Left ventricle myocardium inferior (tissue), 1 donor: ENCODE measurements at regions of chr6 and their contacts with region 1.

Region 1: DNA sequence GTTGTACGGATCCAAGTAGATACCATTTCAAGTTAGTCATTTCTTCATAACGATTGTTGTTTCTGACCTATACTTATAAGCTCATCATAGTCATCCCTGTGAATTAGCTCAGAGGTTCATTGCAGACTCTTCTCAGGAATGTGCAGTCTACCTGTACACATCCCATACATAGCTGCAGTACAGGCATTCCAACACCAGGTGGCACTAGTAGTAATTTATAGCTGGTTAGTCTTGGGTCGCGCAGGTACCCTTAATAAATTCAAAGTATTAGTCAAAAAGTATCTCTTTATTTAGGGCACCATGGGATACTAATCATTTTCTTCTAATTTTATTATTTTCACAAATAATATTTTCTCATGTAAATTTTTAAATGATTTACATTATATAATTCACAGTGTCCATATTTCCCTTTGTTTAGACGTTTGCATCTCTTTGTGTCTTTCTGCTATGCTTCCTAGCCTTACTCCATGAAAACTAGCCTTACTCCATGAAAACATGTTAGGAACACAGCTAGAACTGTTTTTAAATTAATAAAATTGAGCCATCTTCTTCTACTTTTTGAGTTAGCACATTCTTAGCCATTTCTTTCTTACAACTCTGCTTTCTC is 128.6 kb upstream of the FAM83B start:
- DNase-seq: no peak
- H3K4me3 ChIP-seq: no peak overlapping the region
- H3K27ac ChIP-seq: no peak overlapping the region
- H3K4me1 ChIP-seq: peaks cover under 1% of the 10 kb centered on the region
- H3K27me3 ChIP-seq: no peaks in the 10 kb centered on the region
- CTCF ChIP-seq: peak; percentile 87

Region 2: DNA sequence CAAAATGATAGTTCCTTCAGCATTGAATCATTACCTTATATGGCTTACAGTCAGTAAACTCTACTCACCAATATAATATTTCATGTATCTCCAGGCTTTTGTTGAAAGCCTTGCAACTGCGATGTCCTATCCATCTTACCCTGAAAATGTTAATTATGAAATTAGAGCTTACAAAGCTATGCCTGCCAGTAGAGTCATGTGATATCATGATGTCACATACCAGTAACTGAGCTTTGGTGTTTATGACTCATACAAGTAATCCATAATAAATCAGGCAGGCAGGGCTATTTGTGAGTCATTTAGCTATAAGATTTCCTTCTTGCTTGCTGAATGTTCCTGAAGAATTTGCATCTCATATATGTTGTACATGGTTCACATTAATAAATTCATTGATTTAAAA is 83.7 kb after region 1 on chr6:
- intact Hi-C with region 1: no loop called
- DNase-seq: no peak
- H3K4me3 ChIP-seq: no peak overlapping the region
- H3K27ac ChIP-seq: no peak overlapping the region
- H3K4me1 ChIP-seq: peaks cover 11% of the 10 kb centered on the region
- H3K27me3 ChIP-seq: no peaks in the 10 kb centered on the region
- CTCF ChIP-seq: no peak

Region 3: DNA sequence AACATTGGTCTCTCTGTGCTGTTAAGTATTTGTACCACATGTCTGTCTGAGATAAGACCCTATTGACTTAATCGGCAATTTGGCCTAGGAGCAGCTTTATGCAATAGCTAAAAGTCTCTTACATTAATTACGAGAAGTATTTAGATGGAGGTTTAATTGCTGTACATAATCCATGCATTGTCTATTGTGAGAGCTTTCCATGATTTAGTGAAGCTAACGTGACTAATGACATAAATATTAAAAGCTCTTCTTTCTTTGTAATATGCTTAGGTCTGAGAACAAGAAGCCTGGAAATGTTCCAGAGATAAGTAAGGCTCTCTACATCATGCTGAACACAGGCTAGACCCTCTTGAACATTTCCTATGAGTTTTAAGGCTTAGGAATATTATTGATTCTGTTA is 95.9 kb after region 1 on chr6:
- intact Hi-C with region 1: no loop called
- DNase-seq: no peak
- H3K4me3 ChIP-seq: no peak overlapping the region
- H3K27ac ChIP-seq: no peak overlapping the region
- H3K4me1 ChIP-seq: no peaks in the 10 kb centered on the region
- H3K27me3 ChIP-seq: no peaks in the 10 kb centered on the region
- CTCF ChIP-seq: no peak

Region 4: DNA sequence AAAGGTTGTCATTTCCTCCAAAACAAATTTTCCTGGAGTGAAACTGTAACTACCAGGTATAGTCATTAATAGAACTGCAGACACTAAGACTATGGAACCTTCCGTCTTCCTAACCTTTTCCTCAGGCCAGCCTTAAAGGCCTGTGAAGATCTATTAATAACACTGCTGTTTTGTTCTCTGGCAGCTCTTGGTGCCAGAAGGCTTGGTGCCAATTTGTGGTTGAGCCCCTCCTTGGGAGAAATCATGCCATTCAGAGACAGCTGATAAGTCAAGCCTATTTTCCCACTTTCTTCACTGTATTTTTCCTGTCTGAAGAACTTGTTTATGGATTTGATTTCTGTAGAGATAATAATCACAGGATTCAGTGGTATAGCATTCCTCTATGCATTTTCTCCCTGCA is 521.1 kb after region 1 on chr6:
- intact Hi-C with region 1: loop called (anchors 10 kb)
- DNase-seq: no peak
- H3K4me3 ChIP-seq: no peak overlapping the region
- H3K27ac ChIP-seq: no peak overlapping the region
- H3K4me1 ChIP-seq: peaks cover 9% of the 10 kb centered on the region
- H3K27me3 ChIP-seq: no peaks in the 10 kb centered on the region
- CTCF ChIP-seq: no peak